ENCODE measurements at regions of chr2 and their contacts with region 1.

Region 1: GRCh38 chr2:230219419-230220331 is at the start of gene SP110:
- DNase-seq: peak; percentile 93
- ATAC-seq: peak; percentile 93
- H3K4me3 Mint-ChIP-seq: peak within 1 kb of the TSS; percentile 99
- H3K27ac Mint-ChIP-seq: peak within 1 kb of the TSS; percentile 96
- H3K4me1 Mint-ChIP-seq: peaks cover 76% of the 10 kb centered on the region
- H3K27me3 Mint-ChIP-seq: no peaks in the 10 kb centered on the region
- total RNA-seq, gene SP110: 128 to 135 TPM

Region 2: GRCh38 chr2:230106810-230107209 is 112.9 kb before region 1 on chr2:
- CTCF ChIA-PET with region 1: no interaction called
- POLR2A ChIA-PET with region 1: no interaction called
- DNase-seq: no peak
- ATAC-seq: no peak
- H3K4me3 Mint-ChIP-seq: no peak overlapping the region
- H3K27ac Mint-ChIP-seq: no peak overlapping the region
- H3K4me1 Mint-ChIP-seq: no peaks in the 10 kb centered on the region
- H3K27me3 Mint-ChIP-seq: peaks cover 20% of the 10 kb centered on the region

Region 3: GRCh38 chr2:230160112-230160660 is 59.5 kb before region 1 on chr2:
- CTCF ChIA-PET with region 1: no interaction called
- POLR2A ChIA-PET with region 1: no interaction called
- DNase-seq: peak; percentile 64
- ATAC-seq: peak; percentile 60
- H3K4me3 Mint-ChIP-seq: no peak overlapping the region
- H3K27ac Mint-ChIP-seq: no peak overlapping the region
- H3K4me1 Mint-ChIP-seq: peaks cover 13% of the 10 kb centered on the region
- H3K27me3 Mint-ChIP-seq: no peaks in the 10 kb centered on the region

Region 4: GRCh38 chr2:230205721-230206120 is 14.0 kb before region 1 on chr2:
- CTCF ChIA-PET with region 1: interaction called, 4 read pairs
- POLR2A ChIA-PET with region 1: interaction called, 10 read pairs
- DNase-seq: no peak
- ATAC-seq: no peak
- H3K4me3 Mint-ChIP-seq: no peak overlapping the region
- H3K27ac Mint-ChIP-seq: peak overlapping the region; percentile 20
- H3K4me1 Mint-ChIP-seq: peaks cover 5% of the 10 kb centered on the region
- H3K27me3 Mint-ChIP-seq: no peaks in the 10 kb centered on the region

Region 5: GRCh38 chr2:230254152-230254881 is 34.6 kb after region 1 on chr2:
- CTCF ChIA-PET with region 1: no interaction called
- POLR2A ChIA-PET with region 1: interaction called, 15 read pairs
- DNase-seq: peak; percentile 48
- ATAC-seq: peak; percentile 77
- H3K4me3 Mint-ChIP-seq: no peak overlapping the region
- H3K27ac Mint-ChIP-seq: no peak overlapping the region
- H3K4me1 Mint-ChIP-seq: peaks cover 19% of the 10 kb centered on the region
- H3K27me3 Mint-ChIP-seq: no peaks in the 10 kb centered on the region

Region 6: DNA sequence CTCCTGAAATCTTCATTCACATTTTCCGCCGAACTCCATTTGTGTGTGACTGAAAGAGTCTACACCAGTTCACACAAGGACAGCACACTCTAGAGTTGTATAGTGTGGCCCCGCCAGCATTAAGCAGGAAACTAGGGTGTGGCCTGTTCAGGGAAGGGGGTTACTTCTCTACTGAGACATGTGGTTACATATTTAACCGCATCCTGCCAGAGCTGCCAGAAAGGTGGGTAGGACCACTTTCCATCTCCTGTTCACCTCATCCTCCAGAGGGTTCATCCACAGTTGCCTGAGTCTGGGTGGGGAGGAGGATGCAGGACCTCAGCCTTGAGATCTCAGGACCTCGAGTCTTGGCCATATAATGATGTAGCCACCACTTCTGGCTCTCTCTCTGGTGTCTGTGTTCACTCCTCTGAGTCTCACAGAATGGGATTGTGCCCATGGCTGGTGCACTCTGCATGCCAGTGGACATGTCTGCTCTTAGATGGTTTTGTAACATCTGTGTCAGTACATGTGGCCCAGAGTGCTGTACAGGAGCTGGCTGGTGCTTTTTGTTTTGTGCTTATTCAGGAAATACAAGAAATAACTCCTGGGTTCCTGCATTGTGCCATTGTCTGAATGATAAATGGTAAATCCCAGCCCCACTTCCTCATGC is 99.7 kb after region 1 on chr2:
- CTCF ChIA-PET with region 1: interaction called, 3 read pairs
- POLR2A ChIA-PET with region 1: interaction called, 30 read pairs
- DNase-seq: peak; percentile 93
- ATAC-seq: peak; percentile 94
- H3K4me3 Mint-ChIP-seq: peak overlapping the region; percentile 60
- H3K27ac Mint-ChIP-seq: peak overlapping the region; percentile 91
- H3K4me1 Mint-ChIP-seq: peaks cover 66% of the 10 kb centered on the region
- H3K27me3 Mint-ChIP-seq: no peaks in the 10 kb centered on the region

Region 7: GRCh38 chr2:230326453-230327417 is 107.1 kb after region 1 on chr2 and contains the start of gene SP140L:
- CTCF ChIA-PET with region 1: interaction called, 7 read pairs
- POLR2A ChIA-PET with region 1: interaction called, 83 read pairs
- DNase-seq: peak; percentile 92
- ATAC-seq: peak; percentile 98
- H3K4me3 Mint-ChIP-seq: peak within 1 kb of the TSS; percentile 96
- H3K27ac Mint-ChIP-seq: peak within 1 kb of the TSS; percentile 96
- H3K4me1 Mint-ChIP-seq: peaks cover 74% of the 10 kb centered on the region
- H3K27me3 Mint-ChIP-seq: no peaks in the 10 kb centered on the region
- total RNA-seq, gene SP140L: 90.5 to 96.2 TPM

Region 8: DNA sequence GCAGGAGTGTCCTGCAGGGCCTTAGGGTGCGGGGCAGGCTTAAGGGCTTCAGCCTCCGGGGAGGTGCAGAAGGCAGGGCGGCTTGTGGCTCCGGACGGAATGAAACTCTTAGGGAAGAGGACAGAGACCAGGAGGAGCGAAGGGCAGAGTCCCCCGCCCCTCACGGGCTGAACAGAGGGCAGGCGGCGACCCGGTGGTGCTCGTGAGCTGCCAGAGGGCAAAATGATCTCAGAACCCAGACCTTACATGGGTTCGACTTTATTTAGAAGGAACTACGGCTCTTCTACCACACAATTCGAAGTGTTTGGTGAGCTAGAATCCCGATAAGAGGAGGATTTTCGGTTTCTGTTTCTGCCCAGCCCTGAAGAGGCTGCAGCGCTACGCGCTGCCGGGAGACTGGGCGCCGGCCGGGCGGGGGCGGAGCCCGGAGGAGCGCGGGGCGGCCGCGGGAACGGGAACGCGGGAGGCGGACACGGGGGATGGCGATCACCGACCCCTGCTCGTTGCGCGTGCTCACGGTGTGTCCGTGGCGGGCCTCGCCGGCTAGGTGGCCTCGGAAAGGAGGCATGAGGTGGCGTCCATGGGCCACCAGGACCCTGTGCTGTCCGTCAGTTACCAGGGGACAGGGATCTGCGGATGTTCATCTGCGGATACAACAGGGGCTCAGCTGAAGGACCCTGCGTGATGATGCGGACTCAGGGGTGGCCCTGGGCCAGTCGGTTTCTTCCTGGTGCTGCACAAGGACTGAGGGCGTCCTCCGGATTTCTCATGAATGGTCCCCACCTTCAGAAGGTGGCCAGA is 192.1 kb after region 1 on chr2:
- CTCF ChIA-PET with region 1: no interaction called
- POLR2A ChIA-PET with region 1: interaction called, 33 read pairs
- DNase-seq: peak; percentile 72
- ATAC-seq: peak; percentile 79
- H3K4me3 Mint-ChIP-seq: peak overlapping the region; percentile 99
- H3K27ac Mint-ChIP-seq: peak overlapping the region; percentile 100
- H3K4me1 Mint-ChIP-seq: peaks cover 82% of the 10 kb centered on the region
- H3K27me3 Mint-ChIP-seq: no peaks in the 10 kb centered on the region

Region 9: GRCh38 chr2:230505162-230505561 is 285.5 kb after region 1 on chr2:
- CTCF ChIA-PET with region 1: no interaction called
- POLR2A ChIA-PET with region 1: no interaction called
- DNase-seq: no peak
- ATAC-seq: no peak
- H3K4me3 Mint-ChIP-seq: no peak overlapping the region
- H3K27ac Mint-ChIP-seq: no peak overlapping the region
- H3K4me1 Mint-ChIP-seq: no peaks in the 10 kb centered on the region
- H3K27me3 Mint-ChIP-seq: no peaks in the 10 kb centered on the region